Naive thymus-derived CD4-positive, alpha-beta T cell (primary cell): ENCODE measurements at regions of chr9 and their contacts with region 1.

Region 1: GRCh38 chr9:108761655-108762347 is 94.0 kb downstream of the ACTL7B start:
- DNase-seq: peak in 2 of 9 donors; percentile 4 to 13
- ATAC-seq: peak; percentile 49
- H3K4me3 ChIP-seq: no peak overlapping the region
- H3K4me3 Mint-ChIP-seq: no peak overlapping the region
- H3K27ac ChIP-seq: no peak overlapping the region
- H3K27ac Mint-ChIP-seq: no peak overlapping the region
- H3K4me1 ChIP-seq: no peaks in the 10 kb centered on the region
- H3K4me1 Mint-ChIP-seq: no peaks in the 10 kb centered on the region
- H3K27me3 ChIP-seq: no peaks in the 10 kb centered on the region
- H3K27me3 Mint-ChIP-seq: peaks cover 0 to 7% (median 5%) of the 10 kb centered on the region in 5 donors

Region 2: GRCh38 chr9:107137495-107138202 is 1624.2 kb before region 1 on chr9:
- CTCF ChIA-PET with region 1: no interaction called
- POLR2A ChIA-PET with region 1: no interaction called
- intact Hi-C with region 1: loop called (anchors 5 kb)
- DNase-seq: peak in 2 of 9 donors; percentile 2 to 10
- ATAC-seq: no peak
- H3K4me3 ChIP-seq: no peak overlapping the region
- H3K4me3 Mint-ChIP-seq: no peak overlapping the region
- H3K27ac ChIP-seq: no peak overlapping the region
- H3K27ac Mint-ChIP-seq: no peak overlapping the region
- H3K4me1 ChIP-seq: no peaks in the 10 kb centered on the region
- H3K4me1 Mint-ChIP-seq: no peaks in the 10 kb centered on the region
- H3K27me3 ChIP-seq: no peaks in the 10 kb centered on the region
- H3K27me3 Mint-ChIP-seq: peaks cover 9 to 26% (median 14%) of the 10 kb centered on the region in 5 donors

Region 3: DNA sequence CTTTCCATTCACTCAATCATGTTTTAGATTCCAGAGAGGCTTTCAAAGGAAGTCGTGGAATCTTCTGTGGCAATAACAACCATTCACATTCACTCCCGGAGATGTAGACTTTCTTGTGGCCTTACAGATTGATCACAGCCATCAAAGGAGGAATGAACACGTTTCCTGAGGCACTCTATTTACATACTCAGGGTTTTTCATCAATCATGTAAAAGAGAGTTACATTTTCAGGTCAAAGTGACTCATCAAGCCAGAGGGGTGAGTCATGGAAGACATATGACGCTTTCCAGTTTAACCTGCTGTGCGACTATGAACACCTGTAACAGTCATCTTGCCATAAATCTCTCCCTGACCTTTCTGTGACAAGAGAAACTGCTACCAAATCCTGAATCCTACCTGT is 1518.0 kb before region 1 on chr9:
- CTCF ChIA-PET with region 1: no interaction called
- POLR2A ChIA-PET with region 1: no interaction called
- intact Hi-C with region 1: loop called in 1 of 2 experiments (anchors 5 kb)
- DNase-seq: peak in 2 of 9 donors; percentile 8 to 28
- ATAC-seq: no peak
- H3K4me3 ChIP-seq: no peak overlapping the region
- H3K4me3 Mint-ChIP-seq: no peak overlapping the region
- H3K27ac ChIP-seq: no peak overlapping the region
- H3K27ac Mint-ChIP-seq: peak overlapping the region in 2 of 9 donors; percentile 2 to 43
- H3K4me1 ChIP-seq: no peaks in the 10 kb centered on the region
- H3K4me1 Mint-ChIP-seq: peaks cover 5 to 20% (median 12%) of the 10 kb centered on the region in 7 donors
- H3K27me3 ChIP-seq: no peaks in the 10 kb centered on the region
- H3K27me3 Mint-ChIP-seq: peaks cover 0 to 1% (median 0%) of the 10 kb centered on the region in 5 donors

Region 4: DNA sequence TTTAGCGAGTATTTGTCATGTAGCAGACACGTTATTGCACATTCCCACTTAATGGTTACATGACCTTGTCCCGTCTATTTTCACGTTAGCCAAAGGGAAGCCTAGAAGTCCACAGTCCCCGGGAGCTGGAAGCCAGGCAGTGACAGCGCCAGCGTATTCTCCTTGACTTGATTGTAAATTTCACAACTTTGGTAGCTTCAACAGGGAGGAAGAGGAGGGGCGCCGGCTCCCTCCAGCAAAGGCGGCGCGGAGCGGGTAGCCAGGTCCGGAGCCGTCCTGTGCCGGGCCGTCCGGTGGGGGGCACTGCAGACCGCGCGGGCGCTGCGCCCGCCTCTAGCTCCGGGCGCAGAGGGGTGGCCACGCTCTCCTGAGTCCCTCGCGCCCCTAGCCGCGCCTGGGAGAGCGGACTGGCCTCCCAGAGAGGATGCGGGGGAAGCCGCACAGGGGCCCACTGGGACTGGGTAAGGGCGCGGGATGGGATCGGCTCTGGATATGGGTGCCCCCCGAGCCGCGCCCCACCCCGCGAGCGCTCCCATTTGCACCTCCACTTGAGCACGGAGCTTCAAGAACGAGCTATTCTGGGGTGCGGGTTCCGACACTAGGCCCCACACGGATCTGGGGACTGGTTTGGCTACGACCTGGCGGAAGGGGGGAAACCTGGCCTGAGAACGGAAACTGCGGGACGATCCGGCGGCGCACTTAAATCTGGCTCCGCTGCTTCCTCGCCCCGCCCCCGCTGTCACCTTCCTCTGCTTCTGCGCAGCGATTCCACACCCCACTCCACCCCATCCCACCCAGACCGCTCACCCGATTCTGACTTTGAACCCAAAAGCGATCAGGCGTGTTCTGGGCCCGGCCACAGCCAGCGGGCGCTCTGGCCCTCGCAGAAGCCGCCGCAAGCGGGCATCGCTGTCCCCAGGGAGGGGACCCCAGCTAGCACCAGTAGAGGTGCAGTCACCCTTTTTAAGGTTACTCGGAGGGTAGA is 1296.0 kb before region 1 on chr9:
- CTCF ChIA-PET with region 1: no interaction called
- POLR2A ChIA-PET with region 1: no interaction called
- intact Hi-C with region 1: loop called in 1 of 2 experiments (anchors 2 kb)
- DNase-seq: peak in 2 of 9 donors; percentile 28 to 33
- ATAC-seq: peak; percentile 92
- H3K4me3 ChIP-seq: no peak overlapping the region
- H3K4me3 Mint-ChIP-seq: peak overlapping the region in 9 of 10 donors; percentile 25 to 77 (median 57)
- H3K27ac ChIP-seq: no peak overlapping the region
- H3K27ac Mint-ChIP-seq: no peak overlapping the region
- H3K4me1 ChIP-seq: no peaks in the 10 kb centered on the region
- H3K4me1 Mint-ChIP-seq: peaks cover 0 to 10% (median 5%) of the 10 kb centered on the region in 7 donors
- H3K27me3 ChIP-seq: no peaks in the 10 kb centered on the region
- H3K27me3 Mint-ChIP-seq: peaks cover 37 to 58% (median 50%) of the 10 kb centered on the region in 5 donors

Region 5: DNA sequence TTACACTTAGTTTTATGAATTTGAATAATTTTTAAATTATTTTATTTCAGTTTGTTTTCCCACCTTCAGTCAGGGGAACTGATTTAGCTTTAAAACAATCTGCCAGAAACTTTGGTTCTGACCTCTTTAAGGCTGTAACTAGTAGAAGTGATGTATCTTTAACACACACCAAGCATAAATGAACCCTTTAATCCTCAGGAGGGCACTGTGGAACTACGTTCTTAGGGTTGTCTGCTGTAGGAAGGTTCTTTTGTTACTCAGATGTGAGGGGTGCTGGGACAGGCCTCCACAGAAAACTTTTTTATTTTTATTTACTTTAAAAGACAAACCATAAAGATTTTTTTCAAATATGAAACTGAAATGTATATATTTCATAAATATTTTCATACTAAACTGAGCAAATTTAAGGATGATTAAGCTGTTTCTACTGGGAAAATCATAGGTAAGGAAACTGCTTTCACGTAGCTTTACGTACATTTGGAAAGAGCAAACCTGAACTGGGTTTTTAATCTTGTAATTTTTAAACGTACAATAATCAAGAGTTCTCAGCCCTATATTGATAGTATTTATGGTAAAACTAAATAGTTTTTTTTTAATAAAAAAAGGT is 1277.6 kb before region 1 on chr9:
- CTCF ChIA-PET with region 1: no interaction called
- POLR2A ChIA-PET with region 1: no interaction called
- intact Hi-C with region 1: loop called in 1 of 2 experiments (anchors 5 kb)
- DNase-seq: no peak
- ATAC-seq: peak; percentile 40
- H3K4me3 ChIP-seq: no peak overlapping the region
- H3K4me3 Mint-ChIP-seq: no peak overlapping the region
- H3K27ac ChIP-seq: no peak overlapping the region
- H3K27ac Mint-ChIP-seq: no peak overlapping the region
- H3K4me1 ChIP-seq: no peaks in the 10 kb centered on the region
- H3K4me1 Mint-ChIP-seq: peaks cover 0 to 5% (median 5%) of the 10 kb centered on the region in 7 donors
- H3K27me3 ChIP-seq: no peaks in the 10 kb centered on the region
- H3K27me3 Mint-ChIP-seq: peaks cover 25 to 47% (median 41%) of the 10 kb centered on the region in 5 donors